ENCODE measurements at regions of chr1 and their contacts with region 1.

Region 1: DNA sequence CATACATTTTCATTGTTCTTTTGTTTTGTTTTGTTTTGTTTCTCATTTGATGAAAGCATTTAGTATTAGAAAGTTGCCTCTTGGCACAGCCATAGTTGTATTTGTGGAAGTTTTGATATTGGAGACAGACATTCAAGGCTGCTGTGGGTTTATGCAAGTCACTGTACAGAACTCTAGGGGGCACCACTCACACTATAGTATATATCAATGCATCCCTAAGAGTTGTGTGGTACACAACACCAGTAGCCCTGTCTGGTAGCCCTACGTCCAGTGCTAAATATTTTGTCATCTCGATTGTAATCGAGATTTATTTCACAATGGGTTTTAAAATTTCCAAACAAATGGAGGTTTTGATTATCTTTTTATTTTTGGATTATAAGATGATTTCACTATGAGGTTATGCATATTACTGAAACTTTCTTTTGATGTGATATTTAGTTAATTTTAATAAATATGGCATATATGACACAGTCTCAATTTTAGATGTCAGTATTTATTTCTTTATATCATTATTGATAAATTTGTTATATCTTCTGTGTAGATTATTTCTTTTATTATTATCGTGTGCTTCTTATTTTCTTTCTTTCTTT is 112.2 kb downstream of the NR5A2 start:
- DNase-seq: peak; percentile 51 to 78 (median 62)
- ATAC-seq: peak; percentile 99
- H3K4me3 ChIP-seq: no peak overlapping the region
- H3K27ac ChIP-seq: no peak overlapping the region
- H3K4me1 ChIP-seq: no peaks in the 10 kb centered on the region
- H3K27me3 ChIP-seq: peaks cover 0 to 4% of the 10 kb centered on the region in 2 experiments; a peak in 3 of 5 replicates
- CTCF ChIP-seq: peak; percentile 71 to 83 (median 75)
- EP300 ChIP-seq: no peak
- POLR2A ChIP-seq: no peak
- RAD21 ChIP-seq: peak; percentile 82 to 93

Region 2: DNA sequence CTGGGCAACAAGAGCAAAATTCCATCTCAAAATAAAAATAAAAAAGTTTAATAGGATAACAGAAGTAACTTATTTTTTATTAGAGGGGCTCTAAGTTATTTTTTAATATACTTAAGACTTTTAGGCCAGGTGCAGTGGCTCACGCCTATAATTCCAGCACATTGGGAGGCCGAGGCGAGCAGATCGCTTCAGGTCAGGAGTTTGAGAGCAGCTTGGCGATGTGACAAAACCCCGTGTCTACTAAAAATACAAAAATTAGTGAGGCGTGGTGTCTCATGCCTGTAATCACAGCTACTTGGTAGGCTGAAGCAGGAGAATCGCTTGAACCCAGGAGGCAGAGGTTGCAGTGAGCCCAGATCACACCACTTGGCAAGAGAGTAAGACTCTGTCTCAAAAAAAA is 292.7 kb before region 1 on chr1:
- CTCF ChIA-PET with region 1: no interaction called
- POLR2A ChIA-PET with region 1: no interaction called
- in situ Hi-C with region 1: no loop called
- intact Hi-C with region 1: no loop called
- DNase-seq: no peak
- ATAC-seq: no peak
- H3K4me3 ChIP-seq: no peak overlapping the region
- H3K27ac ChIP-seq: no peak overlapping the region
- H3K4me1 ChIP-seq: no peaks in the 10 kb centered on the region
- H3K27me3 ChIP-seq: no peaks in the 10 kb centered on the region
- CTCF ChIP-seq: no peak
- EP300 ChIP-seq: no peak
- POLR2A ChIP-seq: no peak
- RAD21 ChIP-seq: no peak

Region 3: DNA sequence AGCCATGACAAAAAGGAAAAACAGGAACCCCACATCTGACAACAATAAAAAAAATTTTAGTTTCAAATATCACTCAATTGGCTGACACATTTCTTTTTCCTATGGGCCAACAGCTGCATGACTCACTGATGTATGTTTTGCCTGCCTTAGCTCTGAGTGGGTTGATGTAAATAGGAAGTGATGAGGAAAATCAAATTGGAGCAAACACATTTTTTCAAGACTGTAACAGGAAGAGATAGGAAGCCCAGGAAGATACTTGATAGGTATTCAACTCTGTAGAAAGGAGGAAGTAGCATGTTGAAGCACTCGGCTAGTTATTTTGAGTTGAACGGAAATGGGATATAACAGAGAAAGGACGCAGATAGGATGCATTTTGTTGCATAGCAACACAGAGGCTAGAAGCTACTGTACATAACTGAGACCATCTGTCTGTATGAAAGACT is 280.2 kb before region 1 on chr1:
- CTCF ChIA-PET with region 1: no interaction called
- POLR2A ChIA-PET with region 1: no interaction called
- in situ Hi-C with region 1: no loop called
- intact Hi-C with region 1: no loop called
- DNase-seq: no peak
- ATAC-seq: no peak
- H3K4me3 ChIP-seq: no peak overlapping the region
- H3K27ac ChIP-seq: no peak overlapping the region
- H3K4me1 ChIP-seq: no peaks in the 10 kb centered on the region
- H3K27me3 ChIP-seq: no peaks in the 10 kb centered on the region
- CTCF ChIP-seq: no peak
- EP300 ChIP-seq: no peak
- POLR2A ChIP-seq: no peak
- RAD21 ChIP-seq: no peak

Region 4: GRCh38 chr1:199909135-199909534 is 230.6 kb before region 1 on chr1:
- CTCF ChIA-PET with region 1: no interaction called
- POLR2A ChIA-PET with region 1: no interaction called
- in situ Hi-C with region 1: no loop called
- intact Hi-C with region 1: no loop called
- DNase-seq: no peak
- ATAC-seq: no peak
- H3K4me3 ChIP-seq: no peak overlapping the region
- H3K27ac ChIP-seq: no peak overlapping the region
- H3K4me1 ChIP-seq: no peaks in the 10 kb centered on the region
- H3K27me3 ChIP-seq: no peaks in the 10 kb centered on the region; a peak in 1 of 5 replicates
- CTCF ChIP-seq: no peak
- EP300 ChIP-seq: no peak
- POLR2A ChIP-seq: no peak
- RAD21 ChIP-seq: no peak

Region 5: GRCh38 chr1:200150720-200151119 is 11.0 kb after region 1 on chr1:
- CTCF ChIA-PET with region 1: no interaction called
- POLR2A ChIA-PET with region 1: no interaction called
- in situ Hi-C with region 1: no loop called
- intact Hi-C with region 1: no loop called
- DNase-seq: peak; percentile 41 to 85 (median 62)
- ATAC-seq: peak; percentile 82
- H3K4me3 ChIP-seq: no peak overlapping the region
- H3K27ac ChIP-seq: peak overlapping the region; percentile 55; the same call in 2 of the 3 replicates
- H3K4me1 ChIP-seq: peaks cover 11 to 45% of the 10 kb centered on the region in 2 experiments
- H3K27me3 ChIP-seq: no peaks in the 10 kb centered on the region
- CTCF ChIP-seq: 0 out of 6 replicates have a peak, but pooled peaks of 1 of the 3 experiments have one; percentile 4
- EP300 ChIP-seq: peak; percentile 45; the same call in 1 of the 2 replicates
- POLR2A ChIP-seq: no peak
- RAD21 ChIP-seq: peak in 1 of 2 experiments; percentile 47; a peak in 3 of 4 replicates

Region 6: GRCh38 chr1:200184196-200184595 is 44.4 kb after region 1 on chr1:
- CTCF ChIA-PET with region 1: no interaction called
- POLR2A ChIA-PET with region 1: no interaction called
- in situ Hi-C with region 1: no loop called
- intact Hi-C with region 1: loop called (anchors 5 kb)
- DNase-seq: no peak
- ATAC-seq: no peak; the same call in 2 of the 3 replicates
- H3K4me3 ChIP-seq: no peak overlapping the region
- H3K27ac ChIP-seq: no peak overlapping the region
- H3K4me1 ChIP-seq: no peaks in the 10 kb centered on the region
- H3K27me3 ChIP-seq: 0 out of 5 replicates have a peak, but pooled peaks cover 0 to 5% of the 10 kb centered on the region in 2 experiments
- CTCF ChIP-seq: no peak
- EP300 ChIP-seq: no peak
- POLR2A ChIP-seq: no peak
- RAD21 ChIP-seq: no peak

Region 7: DNA sequence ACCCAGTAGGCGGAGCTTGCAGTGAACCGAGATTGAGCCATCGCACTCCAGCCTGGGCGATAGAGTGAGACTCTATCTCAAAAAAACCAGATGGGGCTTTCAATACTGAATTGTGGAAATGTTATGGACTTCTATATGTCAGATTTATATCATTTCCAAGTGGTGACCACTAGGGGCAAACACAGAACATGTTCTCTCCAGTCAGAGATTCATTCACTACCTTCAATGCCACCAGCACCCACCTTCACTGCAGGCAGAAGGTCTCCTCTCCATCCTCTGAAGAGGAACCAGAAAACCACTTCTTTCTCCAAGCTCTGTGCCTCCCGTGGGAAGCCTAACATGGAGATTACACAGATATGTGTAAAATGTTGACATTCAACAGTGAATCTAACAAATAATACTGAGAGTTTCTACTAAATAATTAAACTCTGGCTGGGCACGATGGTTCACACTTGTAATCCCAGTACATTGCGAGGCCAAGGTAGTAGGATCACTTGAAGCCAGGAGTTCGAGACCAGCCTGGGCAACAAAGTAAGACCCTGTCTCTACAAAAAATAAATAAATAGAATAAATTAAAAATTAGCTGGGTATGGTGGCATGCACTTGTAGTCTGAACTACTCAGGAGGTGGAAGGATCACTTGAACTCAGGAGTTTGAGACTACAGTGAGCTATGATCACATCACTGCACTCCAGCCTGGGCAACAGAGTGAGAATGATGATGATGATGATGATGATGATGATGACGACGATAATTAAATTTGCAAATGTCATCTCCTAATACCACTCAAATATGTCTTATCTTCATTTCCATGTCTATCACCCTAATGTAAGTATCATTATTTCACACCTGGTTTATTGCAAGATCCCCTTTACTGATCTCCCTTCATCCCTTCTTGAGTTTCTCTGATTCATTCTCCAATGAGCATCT is 119.0 kb after region 1 on chr1:
- CTCF ChIA-PET with region 1: no interaction called
- POLR2A ChIA-PET with region 1: no interaction called
- in situ Hi-C with region 1: no loop called
- intact Hi-C with region 1: loop called (anchors 5 kb)
- DNase-seq: peak; percentile 27 to 49 (median 38)
- ATAC-seq: peak; percentile 74
- H3K4me3 ChIP-seq: no peak overlapping the region
- H3K27ac ChIP-seq: no peak overlapping the region
- H3K4me1 ChIP-seq: no peaks in the 10 kb centered on the region
- H3K27me3 ChIP-seq: peaks cover 2 to 14% of the 10 kb centered on the region in 2 experiments
- CTCF ChIP-seq: peak; percentile 31 to 63 (median 57); a peak in 5 of 6 replicates
- EP300 ChIP-seq: no peak
- POLR2A ChIP-seq: no peak
- RAD21 ChIP-seq: peak in 1 of 2 experiments; percentile 41; a peak in 2 of 4 replicates

Region 8: GRCh38 chr1:200279810-200280411 is 140.2 kb after region 1 on chr1:
- CTCF ChIA-PET with region 1: no interaction called
- POLR2A ChIA-PET with region 1: no interaction called
- in situ Hi-C with region 1: no loop called
- intact Hi-C with region 1: loop called (anchors 5 kb)
- DNase-seq: peak; percentile 56 to 69 (median 64)
- ATAC-seq: peak; percentile 88
- H3K4me3 ChIP-seq: no peak overlapping the region
- H3K27ac ChIP-seq: no peak overlapping the region
- H3K4me1 ChIP-seq: peaks cover 0 to 11% of the 10 kb centered on the region in 2 experiments; a peak in 2 of 5 replicates
- H3K27me3 ChIP-seq: peaks cover 0 to 9% of the 10 kb centered on the region in 2 experiments; a peak in 1 of 5 replicates
- CTCF ChIP-seq: peak; percentile 76 to 90 (median 77)
- EP300 ChIP-seq: no peak
- POLR2A ChIP-seq: no peak
- RAD21 ChIP-seq: peak; percentile 46 to 76

Measured in K562 (cell line).